ENCODE measurements at regions of chr19 and their contacts with region 1.

Region 1: GRCh38 chr19:53906211-53907192 is 2.6 kb upstream of the CACNG7 start:
- DNase-seq: peak; percentile 76
- H3K4me3 Mint-ChIP-seq: no peak overlapping the region
- H3K27ac Mint-ChIP-seq: no peak overlapping the region
- H3K4me1 Mint-ChIP-seq: peaks cover 22% of the 10 kb centered on the region
- H3K27me3 Mint-ChIP-seq: peaks cover 65% of the 10 kb centered on the region

Region 2: DNA sequence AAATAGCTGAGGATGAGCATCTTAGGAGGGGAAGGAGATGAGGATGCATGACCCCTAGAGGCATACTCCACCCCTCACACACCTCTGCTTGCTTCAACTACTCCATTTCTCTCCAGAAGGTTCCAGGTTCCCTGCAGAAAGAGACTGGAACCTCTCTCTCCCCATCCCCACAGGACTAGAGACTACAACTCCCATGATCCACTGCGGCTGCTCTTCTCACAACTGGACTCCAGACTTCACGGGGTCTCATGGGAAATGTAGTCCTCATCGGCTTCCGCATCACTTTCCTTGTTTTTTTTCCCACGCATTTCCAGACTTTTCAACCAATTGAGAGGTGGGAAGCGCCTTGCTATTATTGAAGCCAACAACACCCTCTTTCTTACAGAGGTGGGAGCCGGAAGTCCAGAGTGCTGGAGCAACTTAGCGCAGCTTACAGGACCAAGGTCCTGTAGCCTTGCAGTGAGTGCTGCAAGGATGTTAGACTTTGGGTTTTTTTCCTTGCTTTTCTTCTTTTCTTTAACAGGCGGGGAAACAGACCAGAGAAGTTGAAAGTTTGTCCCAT is 71.0 kb after region 1 on chr19:
- CTCF ChIA-PET with region 1: no interaction called
- POLR2A ChIA-PET with region 1: no interaction called
- intact Hi-C with region 1: loop called (anchors 1 kb)
- DNase-seq: peak; percentile 69
- H3K4me3 Mint-ChIP-seq: peak overlapping the region; percentile 53
- H3K27ac Mint-ChIP-seq: no peak overlapping the region
- H3K4me1 Mint-ChIP-seq: peaks cover 23% of the 10 kb centered on the region
- H3K27me3 Mint-ChIP-seq: peaks cover 51% of the 10 kb centered on the region

Region 3: DNA sequence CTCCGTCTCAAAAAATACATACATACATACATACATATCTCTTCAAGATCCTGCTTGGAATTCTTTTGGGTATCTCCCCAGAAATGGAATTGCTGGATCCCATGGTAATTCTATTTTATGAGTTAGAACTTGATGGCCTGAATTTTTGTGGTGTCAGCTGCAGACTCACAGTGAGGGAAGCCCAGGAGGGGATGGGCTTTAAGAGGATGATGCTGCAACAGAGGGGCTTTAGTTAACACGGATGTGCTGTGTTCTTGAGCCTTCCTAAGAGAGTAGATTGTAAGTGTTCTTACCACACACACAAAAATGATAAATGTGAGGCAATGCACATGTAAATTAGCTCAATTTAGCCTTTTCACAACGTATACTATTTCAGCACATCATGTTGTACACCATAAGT is 116.7 kb after region 1 on chr19:
- CTCF ChIA-PET with region 1: interaction called, 24 read pairs
- POLR2A ChIA-PET with region 1: no interaction called
- intact Hi-C with region 1: loop called (anchors 5 kb)
- DNase-seq: no peak
- H3K4me3 Mint-ChIP-seq: no peak overlapping the region
- H3K27ac Mint-ChIP-seq: no peak overlapping the region
- H3K4me1 Mint-ChIP-seq: peaks cover 4% of the 10 kb centered on the region
- H3K27me3 Mint-ChIP-seq: peaks cover 32% of the 10 kb centered on the region

Measured in activated CD4-positive, alpha-beta memory T cell treated with anti-CD3 and anti-CD28 coated beads for 36 hours (primary cell).